ENCODE measurements at regions of chr3 and their contacts with region 1.

Region 1: GRCh38 chr3:153768561-153769469 is 352.4 kb upstream of the ARHGEF26 start:
- DNase-seq: no peak
- H3K4me3 ChIP-seq: no peak overlapping the region
- H3K27ac ChIP-seq: no peak overlapping the region
- H3K4me1 ChIP-seq: no peaks in the 10 kb centered on the region
- H3K27me3 ChIP-seq: no peaks in the 10 kb centered on the region
- CTCF ChIP-seq: peak; percentile 63 to 73

Region 2: GRCh38 chr3:153026026-153026425 is 742.8 kb before region 1 on chr3:
- intact Hi-C with region 1: no loop called
- DNase-seq: no peak
- H3K4me3 ChIP-seq: no peak overlapping the region
- H3K27ac ChIP-seq: no peak overlapping the region
- H3K4me1 ChIP-seq: no peaks in the 10 kb centered on the region
- H3K27me3 ChIP-seq: no peaks in the 10 kb centered on the region
- CTCF ChIP-seq: peak; percentile 54 to 57

Region 3: GRCh38 chr3:153045150-153045549 is 723.7 kb before region 1 on chr3:
- intact Hi-C with region 1: loop called (anchors 5 kb)
- DNase-seq: no peak
- H3K4me3 ChIP-seq: no peak overlapping the region
- H3K27ac ChIP-seq: no peak overlapping the region
- H3K4me1 ChIP-seq: peaks cover 0 to 4% (median 2%) of the 10 kb centered on the region in 4 donors
- H3K27me3 ChIP-seq: no peaks in the 10 kb centered on the region
- CTCF ChIP-seq: no peak

Measured in tibial artery (tissue), 4 donors.